Heart right ventricle (tissue), 16 donors: ENCODE measurements at regions of chr3 and their contacts with region 1.

Region 1: GRCh38 chr3:60970850-60971249 is 280.4 kb downstream of the FHIT start:
- DNase-seq: no peak
- ATAC-seq: no peak
- H3K4me3 ChIP-seq: no peak overlapping the region
- H3K27ac ChIP-seq: no peak overlapping the region
- H3K4me1 ChIP-seq: no peaks in the 10 kb centered on the region
- H3K27me3 ChIP-seq: no peaks in the 10 kb centered on the region
- CTCF ChIP-seq: no peak

Region 2: DNA sequence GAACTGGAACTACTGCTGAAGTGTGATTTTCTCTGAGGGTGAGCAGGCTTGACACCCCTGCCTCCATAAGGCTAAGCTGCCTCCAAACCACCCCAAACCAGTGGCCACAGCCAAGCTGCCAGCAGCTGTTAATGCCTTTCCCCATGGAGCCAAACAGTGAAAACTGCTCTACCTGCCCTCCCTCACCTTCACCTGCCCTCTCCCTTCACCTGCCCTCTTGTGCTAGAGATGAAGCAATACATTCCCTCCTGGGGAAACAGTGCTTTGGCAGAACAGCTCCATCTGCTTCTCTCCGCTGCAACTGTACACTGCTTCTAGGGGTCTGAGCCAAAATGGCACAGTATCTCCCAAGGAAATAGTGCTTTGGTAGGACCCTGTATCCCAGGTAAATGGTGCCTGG is 93.7 kb before region 1 on chr3:
- intact Hi-C with region 1: no loop called
- DNase-seq: no peak
- ATAC-seq: no peak
- H3K4me3 ChIP-seq: no peak overlapping the region
- H3K27ac ChIP-seq: no peak overlapping the region
- H3K4me1 ChIP-seq: no peaks in the 10 kb centered on the region
- H3K27me3 ChIP-seq: no peaks in the 10 kb centered on the region
- CTCF ChIP-seq: no peak

Region 3: GRCh38 chr3:60992395-60992794 is 21.5 kb after region 1 on chr3:
- intact Hi-C with region 1: loop called in 1 of 10 experiments (anchors 1 kb)
- DNase-seq: peak in 1 of 2 donors; percentile 17
- ATAC-seq: peak; percentile 30 to 85 (median 62)
- H3K4me3 ChIP-seq: no peak overlapping the region
- H3K27ac ChIP-seq: peak overlapping the region in 2 of 10 donors; percentile 12 to 45
- H3K4me1 ChIP-seq: peaks cover 0 to 25% (median 0%) of the 10 kb centered on the region in 9 donors
- H3K27me3 ChIP-seq: no peaks in the 10 kb centered on the region
- CTCF ChIP-seq: no peak